H1 (cell line): ENCODE measurements at regions of chr20 and their contacts with region 1.

Region 1: DNA sequence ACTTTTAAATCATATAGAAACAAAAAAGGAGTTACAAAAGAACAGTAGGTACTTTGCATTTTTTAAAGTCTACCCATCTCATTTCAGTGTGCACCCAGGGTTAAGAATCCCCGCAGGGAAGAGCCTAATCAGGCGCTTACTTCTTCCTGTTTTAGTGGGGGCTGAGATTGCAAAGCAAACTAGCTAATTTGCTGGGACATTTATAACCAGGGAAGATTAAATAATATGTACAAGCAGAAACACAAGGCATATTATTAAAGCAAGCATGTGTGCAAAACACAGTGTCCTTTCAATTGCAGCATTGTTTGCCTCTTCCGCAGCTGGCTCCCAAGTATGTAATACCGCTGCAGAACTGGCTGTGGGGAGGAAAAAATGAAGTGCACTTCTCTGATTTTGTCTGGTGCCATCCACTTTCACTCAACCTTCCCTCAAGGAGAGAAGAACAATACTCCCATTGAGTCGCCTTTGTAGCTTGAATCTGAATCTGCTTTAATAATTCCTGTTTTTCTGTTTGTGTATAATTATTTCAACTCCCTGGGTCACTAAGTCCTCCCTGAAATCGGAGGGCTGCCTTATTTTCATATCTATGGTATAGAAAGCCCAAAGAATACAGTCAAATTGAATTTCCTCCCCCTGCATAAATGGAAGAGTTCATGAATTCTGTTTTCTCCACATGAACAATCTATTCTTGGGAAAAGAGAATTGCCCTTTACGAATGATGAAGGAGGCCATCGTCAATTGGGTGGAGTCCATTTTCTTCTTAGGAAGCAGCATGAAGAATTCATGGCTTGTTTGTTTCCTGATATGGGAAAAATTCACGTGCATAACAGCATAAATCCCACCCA is 23.3 kb upstream of the BCAS1 start:
- DNase-seq: no peak
- H3K4me3 ChIP-seq: no peak overlapping the region
- H3K27ac ChIP-seq: no peak overlapping the region
- H3K4me1 ChIP-seq: peaks cover 0 to 2% (median 0%) of the 10 kb centered on the region in 4 experiments; a peak in 1 of 7 replicates
- H3K27me3 ChIP-seq: no peaks in the 10 kb centered on the region
- CTCF ChIP-seq: no peak
- EP300 ChIP-seq: no peak
- POLR2A ChIP-seq: no peak
- RAD21 ChIP-seq: no peak

Region 2: DNA sequence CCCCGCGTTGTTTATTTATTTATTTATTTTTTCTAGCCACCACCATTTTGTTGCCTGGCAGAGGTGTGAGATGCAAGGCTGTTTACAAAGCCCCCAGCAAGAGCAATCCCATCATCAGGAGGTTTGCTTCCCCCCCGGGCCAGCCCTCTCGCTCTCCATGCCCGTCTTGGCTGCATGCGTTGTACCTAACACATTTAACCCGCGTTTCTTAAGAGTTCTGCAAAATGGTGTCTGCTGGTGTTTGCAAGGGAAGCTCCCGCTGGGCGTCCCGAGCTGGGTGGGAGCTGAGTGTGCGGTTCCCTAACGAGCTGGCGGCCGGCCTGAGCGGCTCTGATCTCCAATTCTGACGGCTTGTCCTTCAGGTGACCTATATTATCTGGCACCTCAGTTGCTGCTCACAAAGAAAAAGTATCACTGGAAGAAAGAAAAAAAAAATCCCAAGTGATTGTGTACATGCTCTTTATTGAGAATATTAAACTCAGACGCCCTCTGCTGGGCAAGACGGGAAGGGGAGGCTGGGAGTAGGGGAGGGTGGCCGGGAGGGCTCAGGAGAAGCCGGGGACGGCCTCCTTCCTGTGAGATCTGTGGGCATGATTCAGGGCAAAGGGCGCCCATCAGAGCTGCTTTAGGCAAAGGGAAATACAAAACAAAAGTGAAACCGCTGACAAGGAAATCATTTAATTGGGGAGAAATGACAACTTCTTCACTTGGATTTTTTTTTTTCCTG is 178.0 kb before region 1 on chr20:
- CTCF ChIA-PET with region 1: no interaction called
- POLR2A ChIA-PET with region 1: no interaction called
- DNase-seq: peak; percentile 59 to 97
- H3K4me3 ChIP-seq: peak overlapping the region; percentile 40 to 82 (median 68)
- H3K27ac ChIP-seq: peak overlapping the region; percentile 57; the same call in 1 of the 2 replicates
- H3K4me1 ChIP-seq: peaks cover 8 to 21% (median 17%) of the 10 kb centered on the region in 4 experiments; a peak in 6 of 7 replicates
- H3K27me3 ChIP-seq: no peaks in the 10 kb centered on the region
- CTCF ChIP-seq: peak; percentile 72 to 80 (median 72)
- EP300 ChIP-seq: no peak
- POLR2A ChIP-seq: no peak
- RAD21 ChIP-seq: peak; percentile 78 to 80

Region 3: GRCh38 chr20:54078296-54078984 is 15.2 kb before region 1 on chr20:
- CTCF ChIA-PET with region 1: interaction called, 10 read pairs
- POLR2A ChIA-PET with region 1: no interaction called
- DNase-seq: no peak
- H3K4me3 ChIP-seq: no peak overlapping the region
- H3K27ac ChIP-seq: no peak overlapping the region
- H3K4me1 ChIP-seq: no peaks in the 10 kb centered on the region
- H3K27me3 ChIP-seq: no peaks in the 10 kb centered on the region
- CTCF ChIP-seq: no peak
- EP300 ChIP-seq: no peak
- POLR2A ChIP-seq: no peak
- RAD21 ChIP-seq: no peak

Region 4: GRCh38 chr20:54110041-54110841 is 16.6 kb after region 1 on chr20:
- CTCF ChIA-PET with region 1: interaction called, 92 read pairs
- POLR2A ChIA-PET with region 1: no interaction called
- DNase-seq: no peak
- H3K4me3 ChIP-seq: no peak overlapping the region
- H3K27ac ChIP-seq: no peak overlapping the region
- H3K4me1 ChIP-seq: no peaks in the 10 kb centered on the region
- H3K27me3 ChIP-seq: no peaks in the 10 kb centered on the region
- CTCF ChIP-seq: no peak
- EP300 ChIP-seq: no peak
- POLR2A ChIP-seq: no peak
- RAD21 ChIP-seq: no peak

Region 5: GRCh38 chr20:54140927-54141566 is 47.4 kb after region 1 on chr20:
- CTCF ChIA-PET with region 1: no interaction called
- POLR2A ChIA-PET with region 1: no interaction called
- DNase-seq: no peak
- H3K4me3 ChIP-seq: no peak overlapping the region
- H3K27ac ChIP-seq: no peak overlapping the region
- H3K4me1 ChIP-seq: no peaks in the 10 kb centered on the region
- H3K27me3 ChIP-seq: no peaks in the 10 kb centered on the region; a peak in 1 of 7 replicates
- CTCF ChIP-seq: no peak
- EP300 ChIP-seq: no peak
- POLR2A ChIP-seq: no peak
- RAD21 ChIP-seq: no peak

Region 6: GRCh38 chr20:54179946-54180345 is 86.3 kb after region 1 on chr20:
- CTCF ChIA-PET with region 1: interaction called, 10 read pairs
- POLR2A ChIA-PET with region 1: no interaction called
- DNase-seq: no peak
- H3K4me3 ChIP-seq: no peak overlapping the region
- H3K27ac ChIP-seq: no peak overlapping the region
- H3K4me1 ChIP-seq: peaks cover 0 to under 1% (median 0%) of the 10 kb centered on the region in 4 experiments; a peak in 1 of 7 replicates
- H3K27me3 ChIP-seq: peaks cover 2 to 9% (median 7%) of the 10 kb centered on the region in 4 experiments
- CTCF ChIP-seq: no peak
- EP300 ChIP-seq: no peak
- POLR2A ChIP-seq: no peak
- RAD21 ChIP-seq: no peak